A673 (cell line): ENCODE measurements at regions of chr2 and their contacts with region 1.

Region 1: DNA sequence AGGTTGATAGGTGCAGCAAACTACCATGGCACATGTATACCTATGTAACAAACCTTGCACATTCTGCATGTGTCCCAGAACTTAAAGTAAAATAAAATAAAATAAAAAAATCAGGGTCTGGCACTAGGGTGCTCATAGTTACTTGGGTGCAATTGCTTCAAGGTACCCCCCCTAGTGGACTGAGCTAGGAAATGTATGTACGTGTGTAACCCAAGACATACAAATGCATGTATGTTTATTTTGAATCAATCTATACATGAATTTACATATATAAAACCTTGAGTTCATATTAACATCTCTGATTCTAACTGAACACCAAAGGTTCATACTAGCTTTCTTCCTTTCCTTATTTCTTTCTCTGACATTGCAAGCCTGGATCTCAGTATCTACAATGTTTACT is 51.5 kb downstream of the USP37 start:
- DNase-seq: peak; percentile 47
- H3K4me3 ChIP-seq: no peak overlapping the region
- H3K27ac ChIP-seq: no peak overlapping the region
- H3K4me1 ChIP-seq: peaks cover 3% of the 10 kb centered on the region
- H3K27me3 ChIP-seq: no peaks in the 10 kb centered on the region
- CTCF ChIP-seq: peak; percentile 55

Region 2: DNA sequence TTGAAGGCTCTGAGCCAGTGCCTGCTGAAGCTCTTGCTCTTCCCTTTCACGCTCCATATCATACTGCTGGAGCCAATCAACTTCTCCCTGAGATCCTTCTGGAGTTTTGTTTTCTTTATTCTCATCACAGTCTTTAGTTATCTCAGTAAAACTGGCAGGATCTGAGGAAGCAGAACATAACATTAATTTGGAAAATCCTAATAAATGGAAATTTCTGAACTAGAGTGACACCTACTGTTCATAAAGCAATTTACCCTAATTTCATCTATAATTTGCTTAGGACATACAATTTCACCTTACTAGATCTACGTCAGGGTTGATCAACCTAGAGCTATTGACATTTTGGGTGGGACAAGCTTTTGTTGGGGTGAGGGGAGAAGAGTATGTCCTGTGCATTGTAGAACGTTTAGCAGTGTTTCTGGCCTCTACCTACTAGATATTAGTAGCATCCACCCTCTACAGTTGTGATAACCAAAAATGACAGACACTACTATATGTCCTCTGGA is 50.5 kb before region 1 on chr2:
- CTCF ChIA-PET with region 1: no interaction called
- POLR2A ChIA-PET with region 1: no interaction called
- intact Hi-C with region 1: no loop called
- DNase-seq: peak; percentile 40
- H3K4me3 ChIP-seq: no peak overlapping the region
- H3K27ac ChIP-seq: no peak overlapping the region
- H3K4me1 ChIP-seq: no peaks in the 10 kb centered on the region
- H3K27me3 ChIP-seq: no peaks in the 10 kb centered on the region
- CTCF ChIP-seq: peak; percentile 68

Region 3: DNA sequence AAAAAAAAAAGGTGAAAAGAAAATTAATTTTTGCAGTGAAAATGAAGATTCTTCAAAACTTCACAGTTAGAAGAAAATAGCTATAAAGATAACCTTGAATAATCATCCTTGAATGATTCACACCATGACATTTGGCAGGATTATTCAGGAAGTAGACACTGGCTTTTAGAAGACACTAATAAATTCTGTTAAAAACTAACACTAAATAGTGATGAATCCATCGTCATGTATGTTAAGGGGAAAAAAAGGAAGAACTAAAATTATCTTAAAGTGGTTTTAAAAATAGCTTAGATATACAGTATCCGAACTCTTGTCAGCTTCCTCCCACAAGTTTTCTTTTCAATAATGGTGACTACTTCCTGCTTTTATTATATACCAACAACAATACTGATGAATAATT is 41.3 kb after region 1 on chr2:
- CTCF ChIA-PET with region 1: no interaction called
- POLR2A ChIA-PET with region 1: interaction called, 13 read pairs
- intact Hi-C with region 1: no loop called
- DNase-seq: peak; percentile 24
- H3K4me3 ChIP-seq: no peak overlapping the region
- H3K27ac ChIP-seq: no peak overlapping the region
- H3K4me1 ChIP-seq: peaks cover 4% of the 10 kb centered on the region
- H3K27me3 ChIP-seq: no peaks in the 10 kb centered on the region
- CTCF ChIP-seq: no peak